ENCODE measurements at regions of chr7 and their contacts with region 1.

Region 1: GRCh38 chr7:35707422-35707821 is 12.5 kb upstream of the HERPUD2 start:
- DNase-seq: no peak
- H3K4me3 Mint-ChIP-seq: no peak overlapping the region
- H3K27ac Mint-ChIP-seq: no peak overlapping the region
- H3K4me1 Mint-ChIP-seq: peaks cover 5% of the 10 kb centered on the region
- H3K27me3 Mint-ChIP-seq: no peaks in the 10 kb centered on the region
- CTCF ChIP-seq: no peak

Region 2: GRCh38 chr7:35420656-35421055 is 286.8 kb before region 1 on chr7:
- CTCF ChIA-PET with region 1: no interaction called
- POLR2A ChIA-PET with region 1: no interaction called
- intact Hi-C with region 1: no loop called
- DNase-seq: no peak
- H3K4me3 Mint-ChIP-seq: no peak overlapping the region
- H3K27ac Mint-ChIP-seq: no peak overlapping the region
- H3K4me1 Mint-ChIP-seq: no peaks in the 10 kb centered on the region
- H3K27me3 Mint-ChIP-seq: peaks cover 15% of the 10 kb centered on the region
- CTCF ChIP-seq: no peak

Region 3: GRCh38 chr7:35975851-35976454 is 268.5 kb after region 1 on chr7:
- CTCF ChIA-PET with region 1: interaction called, 3 read pairs
- POLR2A ChIA-PET with region 1: no interaction called
- intact Hi-C with region 1: loop called (anchors 5 kb)
- DNase-seq: peak; percentile 80
- H3K4me3 Mint-ChIP-seq: no peak overlapping the region
- H3K27ac Mint-ChIP-seq: no peak overlapping the region
- H3K4me1 Mint-ChIP-seq: no peaks in the 10 kb centered on the region
- H3K27me3 Mint-ChIP-seq: no peaks in the 10 kb centered on the region
- CTCF ChIP-seq: peak; percentile 77